Caco-2 (cell line): ENCODE measurements at regions of chr3 and their contacts with region 1.

Region 1: GRCh38 chr3:89974903-89975519 is 867.6 kb downstream of the EPHA3 start:
- DNase-seq: no peak
- H3K4me3 ChIP-seq: no peak overlapping the region
- H3K4me3 Mint-ChIP-seq: no peak overlapping the region
- H3K27ac Mint-ChIP-seq: no peak overlapping the region
- H3K4me1 ChIP-seq: no peaks in the 10 kb centered on the region
- H3K4me1 Mint-ChIP-seq: no peaks in the 10 kb centered on the region
- H3K27me3 ChIP-seq: no peaks in the 10 kb centered on the region
- H3K27me3 Mint-ChIP-seq: no peaks in the 10 kb centered on the region
- CTCF ChIP-seq: no peak

Region 2: GRCh38 chr3:89628856-89629665 is 345.9 kb before region 1 on chr3:
- CTCF ChIA-PET with region 1: no interaction called
- POLR2A ChIA-PET with region 1: no interaction called
- intact Hi-C with region 1: no loop called
- DNase-seq: no peak
- H3K4me3 ChIP-seq: no peak overlapping the region
- H3K4me3 Mint-ChIP-seq: no peak overlapping the region
- H3K27ac Mint-ChIP-seq: no peak overlapping the region
- H3K4me1 ChIP-seq: peaks cover 21% of the 10 kb centered on the region
- H3K4me1 Mint-ChIP-seq: no peaks in the 10 kb centered on the region
- H3K27me3 ChIP-seq: no peaks in the 10 kb centered on the region
- H3K27me3 Mint-ChIP-seq: no peaks in the 10 kb centered on the region
- CTCF ChIP-seq: no peak

Region 3: GRCh38 chr3:89851974-89852621 is 122.9 kb before region 1 on chr3:
- CTCF ChIA-PET with region 1: no interaction called
- POLR2A ChIA-PET with region 1: no interaction called
- intact Hi-C with region 1: no loop called
- DNase-seq: peak; percentile 52 to 69
- H3K4me3 ChIP-seq: no peak overlapping the region
- H3K4me3 Mint-ChIP-seq: no peak overlapping the region
- H3K27ac Mint-ChIP-seq: no peak overlapping the region
- H3K4me1 ChIP-seq: no peaks in the 10 kb centered on the region
- H3K4me1 Mint-ChIP-seq: no peaks in the 10 kb centered on the region
- H3K27me3 ChIP-seq: no peaks in the 10 kb centered on the region
- H3K27me3 Mint-ChIP-seq: no peaks in the 10 kb centered on the region
- CTCF ChIP-seq: peak; percentile 59 to 78

Region 4: DNA sequence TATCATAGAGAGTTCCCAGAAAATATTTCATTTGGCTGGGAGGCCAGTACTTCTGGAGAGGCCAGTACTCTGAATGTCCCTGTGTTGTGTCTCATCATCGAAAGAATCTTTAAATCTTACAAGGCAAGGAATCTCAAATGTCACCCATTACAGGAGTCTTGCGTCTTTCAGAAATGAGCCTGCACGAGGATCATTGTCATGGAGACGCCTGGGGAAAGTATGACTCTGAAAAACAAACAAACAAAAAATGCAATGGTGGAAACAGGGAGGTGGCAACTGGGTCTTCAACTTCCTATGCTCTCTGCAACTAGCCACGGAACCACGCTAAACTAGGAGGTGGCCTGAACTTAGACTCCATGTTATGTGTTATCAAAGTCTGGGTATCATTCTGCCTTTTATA is 63.0 kb before region 1 on chr3:
- CTCF ChIA-PET with region 1: no interaction called
- POLR2A ChIA-PET with region 1: no interaction called
- intact Hi-C with region 1: loop called (anchors 10 kb)
- DNase-seq: no peak
- H3K4me3 ChIP-seq: no peak overlapping the region
- H3K4me3 Mint-ChIP-seq: no peak overlapping the region
- H3K27ac Mint-ChIP-seq: no peak overlapping the region
- H3K4me1 ChIP-seq: no peaks in the 10 kb centered on the region
- H3K4me1 Mint-ChIP-seq: no peaks in the 10 kb centered on the region
- H3K27me3 ChIP-seq: no peaks in the 10 kb centered on the region
- H3K27me3 Mint-ChIP-seq: no peaks in the 10 kb centered on the region
- CTCF ChIP-seq: no peak

Region 5: DNA sequence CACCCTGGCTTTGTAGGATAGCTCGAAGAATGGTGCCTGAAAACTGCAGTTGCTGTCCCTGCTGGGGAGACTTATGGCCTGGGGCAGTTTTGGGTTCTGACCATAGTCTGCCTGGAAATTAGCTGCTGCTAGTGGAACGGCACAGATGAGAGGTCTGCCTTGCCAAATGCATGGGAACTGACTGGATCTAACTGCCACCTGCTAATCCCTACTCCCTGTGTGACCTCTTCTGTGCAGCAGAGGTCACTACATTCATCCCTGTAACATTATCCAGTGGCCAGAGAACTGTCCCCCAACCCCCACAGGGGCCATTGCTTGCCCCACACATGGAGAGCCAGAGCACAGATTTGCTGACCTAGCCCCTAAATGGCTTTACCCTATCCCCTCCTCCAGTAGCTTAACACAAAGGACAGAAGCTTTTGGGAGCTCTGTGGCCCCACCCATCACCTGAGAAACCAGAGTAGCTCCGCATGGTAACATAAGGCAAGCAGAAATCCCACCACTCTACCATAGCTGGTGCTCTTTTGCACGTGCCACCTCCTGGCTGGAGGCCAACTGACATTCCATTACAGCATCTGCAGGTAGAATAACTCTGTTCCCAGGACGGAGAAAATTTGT is 27.6 kb before region 1 on chr3:
- CTCF ChIA-PET with region 1: no interaction called
- POLR2A ChIA-PET with region 1: no interaction called
- intact Hi-C with region 1: no loop called
- DNase-seq: no peak
- H3K4me3 ChIP-seq: no peak overlapping the region
- H3K4me3 Mint-ChIP-seq: no peak overlapping the region
- H3K27ac Mint-ChIP-seq: no peak overlapping the region
- H3K4me1 ChIP-seq: no peaks in the 10 kb centered on the region
- H3K4me1 Mint-ChIP-seq: no peaks in the 10 kb centered on the region
- H3K27me3 ChIP-seq: no peaks in the 10 kb centered on the region
- H3K27me3 Mint-ChIP-seq: no peaks in the 10 kb centered on the region
- CTCF ChIP-seq: no peak

Region 6: DNA sequence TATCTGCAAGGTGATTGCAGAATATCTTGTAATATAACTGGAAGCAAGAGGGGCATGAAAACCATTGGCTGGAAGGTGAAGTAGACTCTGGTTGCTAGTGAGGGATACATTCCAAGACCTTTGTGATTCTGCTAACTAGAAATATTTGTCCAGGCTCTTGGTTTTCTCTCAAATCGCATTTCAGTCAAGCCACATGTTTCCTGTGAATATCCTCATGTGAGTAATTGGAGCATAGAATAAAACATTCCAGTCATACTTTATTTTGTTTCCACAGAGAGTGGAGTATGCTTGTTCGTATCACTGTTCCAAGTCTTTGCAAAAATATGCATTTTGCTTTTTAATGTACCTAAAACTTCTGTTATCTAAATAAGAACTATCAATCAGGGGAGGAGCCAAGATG is 17.6 kb before region 1 on chr3:
- CTCF ChIA-PET with region 1: no interaction called
- POLR2A ChIA-PET with region 1: no interaction called
- intact Hi-C with region 1: no loop called
- DNase-seq: no peak
- H3K4me3 ChIP-seq: no peak overlapping the region
- H3K4me3 Mint-ChIP-seq: no peak overlapping the region
- H3K27ac Mint-ChIP-seq: no peak overlapping the region
- H3K4me1 ChIP-seq: no peaks in the 10 kb centered on the region
- H3K4me1 Mint-ChIP-seq: no peaks in the 10 kb centered on the region
- H3K27me3 ChIP-seq: no peaks in the 10 kb centered on the region
- H3K27me3 Mint-ChIP-seq: no peaks in the 10 kb centered on the region
- CTCF ChIP-seq: no peak